Mucosa of descending colon (tissue), 3 donors: ENCODE measurements at regions of chr11 and their contacts with region 1.

Region 1: DNA sequence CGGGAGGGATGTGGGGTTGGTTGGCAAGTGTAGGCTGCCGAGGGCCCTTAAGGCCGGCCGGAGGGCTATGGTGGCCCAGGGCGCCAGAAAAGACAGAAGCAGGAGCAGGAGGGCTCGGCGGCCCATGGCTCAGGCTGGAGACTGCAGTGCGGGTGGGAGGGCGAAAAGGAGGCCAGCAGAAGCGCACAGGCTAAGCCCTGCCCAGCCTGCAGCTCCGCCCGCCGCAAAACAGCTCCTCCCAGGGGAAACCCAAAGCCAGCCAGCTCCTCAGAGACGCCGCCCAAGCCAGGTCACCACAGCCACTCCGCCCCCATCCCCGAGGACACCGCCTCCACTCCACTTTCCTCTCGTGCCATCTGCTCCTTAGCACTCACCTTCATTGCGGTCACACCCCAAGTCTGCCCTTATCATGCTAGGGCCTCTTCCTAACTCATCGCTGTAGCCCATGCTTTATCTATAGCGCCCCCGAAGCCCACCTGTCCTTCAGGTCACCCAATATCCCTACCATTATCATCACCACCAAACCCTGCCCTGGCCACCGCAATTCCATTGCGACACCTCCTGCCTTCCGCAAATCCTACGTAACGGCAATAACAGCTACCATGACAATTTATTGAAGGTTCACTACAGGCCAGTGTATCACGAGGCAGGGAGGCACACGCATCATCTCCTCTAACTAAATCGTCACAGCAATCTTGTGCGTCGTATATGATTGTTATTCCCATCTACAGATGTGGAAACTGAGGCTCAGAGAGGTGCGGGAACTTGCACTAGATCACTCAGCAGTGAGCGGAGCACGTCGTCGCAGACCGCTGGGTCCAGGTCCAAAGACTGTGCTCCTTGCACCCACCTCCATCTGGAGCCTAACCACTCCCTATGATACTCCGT is at the start of gene PRCP:
- DNase-seq: peak; percentile 97 to 98 (median 98)
- ATAC-seq: peak; percentile 92
- H3K4me3 ChIP-seq: peak within 1 kb of the TSS; percentile 27
- H3K4me1 ChIP-seq: peaks cover 5% of the 10 kb centered on the region
- CTCF ChIP-seq: no peak
- total RNA-seq, gene PRCP: 29.6 to 35.6 (median 30.8) TPM

Region 2: GRCh38 chr11:82507288-82507687 is 393.2 kb before region 1 on chr11:
- intact Hi-C with region 1: no loop called
- DNase-seq: no peak
- ATAC-seq: no peak
- H3K4me3 ChIP-seq: no peak overlapping the region
- H3K4me1 ChIP-seq: no peaks in the 10 kb centered on the region
- CTCF ChIP-seq: no peak

Region 3: DNA sequence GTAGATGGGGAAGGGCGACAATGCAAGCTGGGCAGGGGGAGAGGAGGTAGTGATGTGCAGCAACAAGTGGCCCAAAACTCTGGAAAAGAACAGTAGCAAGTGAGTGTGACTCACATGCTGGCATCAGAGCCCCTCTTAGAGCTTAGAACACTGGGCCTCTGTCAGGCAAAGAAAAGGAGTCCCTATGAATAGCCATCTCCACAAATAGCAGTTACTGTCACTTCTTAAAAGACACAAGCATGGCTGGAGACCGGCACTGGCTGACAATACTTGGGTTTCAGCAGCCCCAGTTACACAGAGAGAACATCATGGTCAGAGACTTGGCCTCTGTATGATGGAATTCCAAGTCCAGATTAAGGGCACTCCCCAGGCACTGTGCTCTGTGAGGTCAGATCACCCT is 58.5 kb before region 1 on chr11:
- intact Hi-C with region 1: no loop called
- DNase-seq: no peak
- ATAC-seq: no peak
- H3K4me3 ChIP-seq: no peak overlapping the region
- H3K4me1 ChIP-seq: no peaks in the 10 kb centered on the region
- CTCF ChIP-seq: no peak

Region 4: DNA sequence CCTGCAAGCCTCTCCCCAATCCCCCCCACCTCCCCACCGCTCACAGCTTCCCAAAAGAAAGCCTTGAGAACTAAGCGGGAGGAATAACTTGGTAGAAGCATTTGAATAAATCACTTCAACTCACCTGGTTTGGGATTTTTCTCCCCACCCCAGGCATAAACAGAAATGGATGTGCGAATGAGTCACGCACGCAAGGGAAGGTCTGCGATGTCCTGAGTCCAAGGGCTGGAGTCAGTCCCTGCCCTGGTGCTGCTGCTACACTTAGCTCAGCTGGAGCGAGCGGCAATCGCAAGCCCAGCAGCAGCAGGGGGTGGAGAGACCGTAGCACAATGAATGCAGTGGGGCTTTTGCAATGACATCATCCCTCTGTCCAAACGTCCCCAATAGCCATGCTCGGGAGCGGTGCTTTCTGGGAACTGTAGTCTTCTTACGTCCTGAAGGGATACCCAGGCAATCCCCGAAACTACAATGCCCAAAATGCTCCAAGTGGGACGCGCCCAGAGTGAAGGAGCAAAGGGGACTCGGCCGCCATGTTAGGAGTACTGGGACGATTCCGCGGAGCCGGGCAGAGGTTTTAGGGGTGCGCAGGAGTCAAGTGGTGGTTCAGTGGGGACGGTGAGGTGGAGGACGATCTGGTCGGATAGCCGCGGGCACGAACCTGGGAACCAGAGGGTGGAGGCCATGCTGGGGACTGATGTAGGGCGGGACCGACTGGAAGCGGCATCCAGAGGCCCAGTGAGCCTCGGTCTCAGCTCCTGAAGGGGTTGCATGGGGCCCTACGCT is 171.2 kb after region 1 on chr11 and contains the start of gene RAB30:
- intact Hi-C with region 1: loop called in 1 of 2 experiments (anchors 10 kb)
- DNase-seq: peak; percentile 90 to 98 (median 96)
- ATAC-seq: peak; percentile 98
- H3K4me3 ChIP-seq: peak within 1 kb of the TSS; percentile 70
- H3K4me1 ChIP-seq: peaks cover 14% of the 10 kb centered on the region
- CTCF ChIP-seq: no peak
- total RNA-seq, gene RAB30: 16.2 to 30.7 (median 19.1) TPM

Region 5: DNA sequence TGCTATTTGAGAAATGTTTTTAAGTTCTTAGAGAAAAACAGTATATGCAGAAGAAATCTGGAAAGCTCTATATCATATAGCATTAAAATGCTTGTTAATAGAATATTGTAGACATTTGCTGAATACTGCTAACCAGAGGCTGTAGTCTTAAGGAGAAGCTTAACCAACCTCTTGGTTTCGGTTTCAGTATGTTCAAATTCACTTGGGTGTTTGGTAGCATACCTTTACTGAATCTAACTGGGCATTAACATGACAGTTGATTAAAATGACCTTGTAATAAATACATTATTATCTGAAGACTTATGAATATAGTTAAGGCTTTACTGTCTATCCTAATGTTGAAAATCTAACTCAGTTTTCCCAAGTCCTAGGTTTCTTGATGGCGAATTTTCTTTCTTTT is 261.9 kb after region 1 on chr11:
- intact Hi-C with region 1: loop called in 1 of 2 experiments (anchors 10 kb)
- DNase-seq: no peak
- ATAC-seq: no peak
- H3K4me3 ChIP-seq: no peak overlapping the region
- H3K4me1 ChIP-seq: peaks cover 8% of the 10 kb centered on the region
- CTCF ChIP-seq: no peak

Region 6: DNA sequence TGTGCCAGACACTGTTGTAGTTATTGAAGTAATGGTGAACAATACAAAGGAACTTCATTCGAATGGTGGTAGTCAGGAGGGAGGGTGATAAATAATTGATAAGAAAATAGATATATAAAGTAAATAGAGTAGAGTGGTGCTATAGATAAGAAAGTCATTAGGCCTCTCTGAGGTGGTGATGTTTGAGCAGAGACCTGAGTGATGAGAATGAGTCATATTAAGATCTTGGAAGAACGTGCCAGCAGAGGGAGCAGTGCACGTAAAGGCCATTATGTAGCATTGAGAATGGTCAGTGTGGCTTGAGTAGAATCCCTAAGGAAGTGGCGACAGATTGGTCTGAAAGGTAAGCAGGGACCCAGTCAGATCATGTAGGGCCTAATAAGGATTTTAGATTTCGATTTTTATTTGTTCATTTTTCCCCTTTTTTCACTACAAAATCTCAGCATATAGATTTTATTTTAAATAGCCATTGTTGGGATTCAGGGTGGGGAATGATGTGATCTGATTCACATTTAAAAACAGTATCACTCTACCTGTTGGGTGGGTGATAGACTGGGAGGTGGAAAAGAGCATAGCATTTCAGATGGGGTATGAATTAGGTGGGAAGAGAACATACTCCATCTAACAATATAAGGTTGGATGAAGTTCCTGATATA is 340.9 kb after region 1 on chr11:
- intact Hi-C with region 1: loop called (anchors 10 kb)
- DNase-seq: peak in 1 of 3 donors; percentile 88
- ATAC-seq: peak; percentile 95
- H3K4me3 ChIP-seq: no peak overlapping the region
- H3K4me1 ChIP-seq: no peaks in the 10 kb centered on the region
- CTCF ChIP-seq: no peak